ENCODE measurements at regions of chr4 and their contacts with region 1.

Region 1: DNA sequence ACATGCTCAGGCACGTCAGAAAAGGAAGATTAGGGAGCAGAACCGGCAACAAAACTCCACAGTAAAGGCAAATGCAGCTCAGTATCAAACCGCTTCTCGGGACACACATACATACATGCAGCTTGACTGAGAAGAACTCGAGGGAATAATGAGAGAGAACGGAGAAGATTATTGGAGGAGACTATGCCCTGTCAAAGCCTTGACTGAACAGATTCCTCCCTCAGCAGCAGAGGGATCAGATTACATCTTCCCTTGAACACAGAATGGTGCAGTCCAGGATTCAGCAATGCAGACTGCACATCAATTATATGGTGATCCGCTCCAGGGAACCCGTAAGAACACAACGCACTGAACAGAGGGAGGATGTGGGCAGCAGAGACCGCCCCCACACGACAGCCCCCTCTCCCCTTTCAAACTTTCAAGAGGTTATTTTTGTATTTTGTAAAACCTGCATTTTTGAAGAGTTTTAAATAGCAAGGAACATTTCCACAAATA is 183.2 kb downstream of the FBXW7 start:
- DNase-seq: peak in 6 of 9 donors; percentile 3 to 40 (median 32)
- ATAC-seq: peak; percentile 68
- H3K4me3 ChIP-seq: no peak overlapping the region
- H3K4me3 Mint-ChIP-seq: peak overlapping the region in 9 of 10 donors; percentile 9 to 68 (median 46)
- H3K27ac ChIP-seq: no peak overlapping the region
- H3K27ac Mint-ChIP-seq: peak overlapping the region in 2 of 9 donors; percentile 66 to 67
- H3K4me1 ChIP-seq: peaks cover 0 to 8% of the 10 kb centered on the region in 2 donors
- H3K4me1 Mint-ChIP-seq: peaks cover 11 to 39% (median 22%) of the 10 kb centered on the region in 7 donors
- H3K27me3 ChIP-seq: no peaks in the 10 kb centered on the region
- H3K27me3 Mint-ChIP-seq: no peaks in the 10 kb centered on the region

Region 2: GRCh38 chr4:151766700-151767099 is 586.0 kb before region 1 on chr4:
- CTCF ChIA-PET with region 1: no interaction called
- POLR2A ChIA-PET with region 1: interaction called, 3 read pairs
- intact Hi-C with region 1: loop called in 1 of 2 experiments (anchors 1 kb)
- DNase-seq: peak in 3 of 9 donors; percentile 5 to 25 (median 9)
- ATAC-seq: no peak
- H3K4me3 ChIP-seq: no peak overlapping the region
- H3K4me3 Mint-ChIP-seq: no peak overlapping the region
- H3K27ac ChIP-seq: no peak overlapping the region
- H3K27ac Mint-ChIP-seq: no peak overlapping the region
- H3K4me1 ChIP-seq: no peaks in the 10 kb centered on the region
- H3K4me1 Mint-ChIP-seq: peaks cover 0 to 4% (median 2%) of the 10 kb centered on the region in 7 donors
- H3K27me3 ChIP-seq: no peaks in the 10 kb centered on the region
- H3K27me3 Mint-ChIP-seq: peaks cover 0 to 13% (median 8%) of the 10 kb centered on the region in 5 donors

Region 3: GRCh38 chr4:151990201-151990600 is 362.5 kb before region 1 on chr4:
- CTCF ChIA-PET with region 1: interaction called, 3 read pairs
- POLR2A ChIA-PET with region 1: no interaction called
- intact Hi-C with region 1: loop called in 1 of 2 experiments (anchors 5 kb)
- DNase-seq: no peak
- ATAC-seq: no peak
- H3K4me3 ChIP-seq: no peak overlapping the region
- H3K4me3 Mint-ChIP-seq: peak overlapping the region in 4 of 10 donors; percentile 18 to 84 (median 76)
- H3K27ac ChIP-seq: no peak overlapping the region
- H3K27ac Mint-ChIP-seq: peak overlapping the region; percentile 77 to 92 (median 90)
- H3K4me1 ChIP-seq: peaks cover 48 to 51% of the 10 kb centered on the region in 2 donors
- H3K4me1 Mint-ChIP-seq: peaks cover 38 to 64% (median 56%) of the 10 kb centered on the region in 7 donors
- H3K27me3 ChIP-seq: no peaks in the 10 kb centered on the region
- H3K27me3 Mint-ChIP-seq: peaks cover 0 to 2% (median 0%) of the 10 kb centered on the region in 5 donors

Region 4: GRCh38 chr4:152032722-152033131 is 319.9 kb before region 1 on chr4:
- CTCF ChIA-PET with region 1: no interaction called
- POLR2A ChIA-PET with region 1: no interaction called
- intact Hi-C with region 1: no loop called
- DNase-seq: no peak
- ATAC-seq: no peak
- H3K4me3 ChIP-seq: no peak overlapping the region
- H3K4me3 Mint-ChIP-seq: no peak overlapping the region
- H3K27ac ChIP-seq: no peak overlapping the region
- H3K27ac Mint-ChIP-seq: no peak overlapping the region
- H3K4me1 ChIP-seq: no peaks in the 10 kb centered on the region
- H3K4me1 Mint-ChIP-seq: peaks cover 0 to 10% (median 4%) of the 10 kb centered on the region in 7 donors
- H3K27me3 ChIP-seq: no peaks in the 10 kb centered on the region
- H3K27me3 Mint-ChIP-seq: peaks cover 0 to 6% (median 0%) of the 10 kb centered on the region in 5 donors

Region 5: GRCh38 chr4:152065545-152065944 is 287.1 kb before region 1 on chr4:
- CTCF ChIA-PET with region 1: interaction called, 7 read pairs
- POLR2A ChIA-PET with region 1: interaction called, 7 read pairs
- intact Hi-C with region 1: loop called in 1 of 2 experiments (anchors 1 kb)
- DNase-seq: peak in 5 of 9 donors; percentile 6 to 36 (median 22)
- ATAC-seq: no peak
- H3K4me3 ChIP-seq: no peak overlapping the region
- H3K4me3 Mint-ChIP-seq: peak overlapping the region in 1 of 10 donors; percentile 1
- H3K27ac ChIP-seq: no peak overlapping the region
- H3K27ac Mint-ChIP-seq: peak overlapping the region in 3 of 9 donors; percentile 12 to 40 (median 28)
- H3K4me1 ChIP-seq: peaks cover 4 to 18% of the 10 kb centered on the region in 2 donors
- H3K4me1 Mint-ChIP-seq: peaks cover 18 to 70% (median 53%) of the 10 kb centered on the region in 7 donors
- H3K27me3 ChIP-seq: no peaks in the 10 kb centered on the region
- H3K27me3 Mint-ChIP-seq: no peaks in the 10 kb centered on the region

Region 6: GRCh38 chr4:152255437-152256011 is 97.1 kb before region 1 on chr4:
- CTCF ChIA-PET with region 1: no interaction called
- POLR2A ChIA-PET with region 1: interaction called, 3 read pairs
- intact Hi-C with region 1: loop called in 1 of 2 experiments (anchors 5 kb)
- DNase-seq: peak in 8 of 9 donors; percentile 44 to 64 (median 58)
- ATAC-seq: peak; percentile 89
- H3K4me3 ChIP-seq: no peak overlapping the region
- H3K4me3 Mint-ChIP-seq: no peak overlapping the region
- H3K27ac ChIP-seq: peak overlapping the region; percentile 36
- H3K27ac Mint-ChIP-seq: no peak overlapping the region
- H3K4me1 ChIP-seq: peaks cover 37 to 45% of the 10 kb centered on the region in 2 donors
- H3K4me1 Mint-ChIP-seq: peaks cover 0 to 17% (median 11%) of the 10 kb centered on the region in 7 donors
- H3K27me3 ChIP-seq: no peaks in the 10 kb centered on the region
- H3K27me3 Mint-ChIP-seq: peaks cover 0 to 2% (median 0%) of the 10 kb centered on the region in 5 donors

Region 7: DNA sequence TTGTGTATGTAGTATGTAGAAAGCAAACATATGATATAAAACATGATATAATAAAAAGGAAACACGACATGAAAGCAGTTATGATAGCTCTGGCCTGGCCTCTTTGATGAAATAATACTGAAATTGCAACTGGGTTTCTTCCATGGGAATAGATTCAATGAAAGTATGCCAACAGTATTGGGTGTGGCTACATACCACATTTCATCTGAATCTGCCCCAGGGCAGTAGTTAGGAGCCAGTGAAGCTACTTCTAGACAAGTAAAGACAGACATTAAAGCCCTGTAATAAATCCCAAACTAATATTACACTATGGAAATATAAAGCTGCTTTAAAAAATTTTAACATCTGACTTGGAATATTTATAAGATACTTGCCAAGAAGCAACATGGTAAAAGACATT is 24.1 kb before region 1 on chr4:
- CTCF ChIA-PET with region 1: no interaction called
- POLR2A ChIA-PET with region 1: interaction called, 3 read pairs
- intact Hi-C with region 1: loop called in 1 of 2 experiments (anchors 2 kb)
- DNase-seq: no peak
- ATAC-seq: no peak
- H3K4me3 ChIP-seq: no peak overlapping the region
- H3K4me3 Mint-ChIP-seq: no peak overlapping the region
- H3K27ac ChIP-seq: no peak overlapping the region
- H3K27ac Mint-ChIP-seq: peak overlapping the region in 2 of 9 donors; percentile 75 to 76
- H3K4me1 ChIP-seq: peaks cover 0 to 13% of the 10 kb centered on the region in 2 donors
- H3K4me1 Mint-ChIP-seq: peaks cover 6 to 24% (median 21%) of the 10 kb centered on the region in 7 donors
- H3K27me3 ChIP-seq: no peaks in the 10 kb centered on the region
- H3K27me3 Mint-ChIP-seq: no peaks in the 10 kb centered on the region

Region 8: GRCh38 chr4:152408514-152409327 is 56.1 kb after region 1 on chr4:
- CTCF ChIA-PET with region 1: no interaction called
- POLR2A ChIA-PET with region 1: no interaction called
- intact Hi-C with region 1: no loop called
- DNase-seq: peak in 6 of 9 donors; percentile 7 to 29 (median 21)
- ATAC-seq: peak; percentile 77
- H3K4me3 ChIP-seq: no peak overlapping the region
- H3K4me3 Mint-ChIP-seq: no peak overlapping the region
- H3K27ac ChIP-seq: no peak overlapping the region
- H3K27ac Mint-ChIP-seq: no peak overlapping the region
- H3K4me1 ChIP-seq: no peaks in the 10 kb centered on the region
- H3K4me1 Mint-ChIP-seq: peaks cover 2 to 20% (median 11%) of the 10 kb centered on the region in 7 donors
- H3K27me3 ChIP-seq: no peaks in the 10 kb centered on the region
- H3K27me3 Mint-ChIP-seq: no peaks in the 10 kb centered on the region

Measured in naive thymus-derived CD4-positive, alpha-beta T cell (primary cell).